WTC11 (cell line): ENCODE measurements at regions of chr19 and their contacts with region 1.

Region 1: DNA sequence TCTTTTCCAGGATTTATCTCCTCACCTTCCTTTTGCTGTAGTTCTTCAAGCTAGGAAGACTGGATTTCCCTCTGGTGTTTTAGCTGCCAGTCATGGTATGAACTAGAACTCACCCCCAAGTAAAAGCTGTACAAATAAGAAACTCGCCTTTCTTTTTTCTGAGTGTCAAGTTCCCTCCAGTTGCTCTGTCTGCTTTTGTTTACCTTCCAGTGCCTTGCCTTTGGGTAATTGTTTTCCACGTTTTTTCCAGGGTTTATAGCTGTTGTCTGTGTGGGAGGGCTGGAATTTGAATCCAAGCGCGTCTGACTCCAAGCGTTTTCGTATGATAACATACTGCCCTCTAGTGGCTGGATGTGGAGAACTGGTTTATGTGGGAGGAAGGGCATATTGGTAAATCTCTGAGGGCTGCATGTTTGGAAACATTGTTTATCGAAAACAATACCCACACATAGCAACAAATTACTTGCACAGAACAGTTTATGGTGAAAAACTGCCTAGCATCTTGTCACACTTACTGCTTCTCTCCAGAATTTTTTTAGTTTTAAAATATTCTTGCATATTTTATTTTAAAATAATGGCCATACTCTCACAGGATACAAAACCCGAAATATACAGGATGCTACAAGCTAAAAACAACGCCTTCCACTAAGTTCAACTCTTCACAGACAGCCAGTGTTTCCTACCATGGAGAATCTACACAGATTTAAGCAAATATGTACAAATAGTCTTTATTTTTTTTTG is 19.2 kb downstream of the RCN3 start:
- DNase-seq: peak; percentile 71
- ATAC-seq: peak; percentile 83
- H3K4me3 Mint-ChIP-seq: peak overlapping the region; percentile 52
- H3K27ac Mint-ChIP-seq: peak overlapping the region; percentile 67
- H3K4me1 Mint-ChIP-seq: peaks cover 4% of the 10 kb centered on the region
- H3K27me3 Mint-ChIP-seq: no peaks in the 10 kb centered on the region
- CTCF ChIP-seq: peak; percentile 72

Region 2: GRCh38 chr19:49451430-49452181 is 95.4 kb before region 1 on chr19 and contains the start of gene PIH1D1:
- CTCF ChIA-PET with region 1: interaction called, 17 read pairs
- POLR2A ChIA-PET with region 1: no interaction called
- DNase-seq: peak; percentile 96
- ATAC-seq: peak; percentile 59
- H3K4me3 Mint-ChIP-seq: peak within 1 kb of the TSS; percentile 94
- H3K27ac Mint-ChIP-seq: peak within 1 kb of the TSS; percentile 100
- H3K4me1 Mint-ChIP-seq: peaks cover 36% of the 10 kb centered on the region
- H3K27me3 Mint-ChIP-seq: no peaks in the 10 kb centered on the region
- CTCF ChIP-seq: no peak
- total RNA-seq, gene PIH1D1: 153 to 170 TPM (median 156 TPM) in 3 replicates

Region 3: DNA sequence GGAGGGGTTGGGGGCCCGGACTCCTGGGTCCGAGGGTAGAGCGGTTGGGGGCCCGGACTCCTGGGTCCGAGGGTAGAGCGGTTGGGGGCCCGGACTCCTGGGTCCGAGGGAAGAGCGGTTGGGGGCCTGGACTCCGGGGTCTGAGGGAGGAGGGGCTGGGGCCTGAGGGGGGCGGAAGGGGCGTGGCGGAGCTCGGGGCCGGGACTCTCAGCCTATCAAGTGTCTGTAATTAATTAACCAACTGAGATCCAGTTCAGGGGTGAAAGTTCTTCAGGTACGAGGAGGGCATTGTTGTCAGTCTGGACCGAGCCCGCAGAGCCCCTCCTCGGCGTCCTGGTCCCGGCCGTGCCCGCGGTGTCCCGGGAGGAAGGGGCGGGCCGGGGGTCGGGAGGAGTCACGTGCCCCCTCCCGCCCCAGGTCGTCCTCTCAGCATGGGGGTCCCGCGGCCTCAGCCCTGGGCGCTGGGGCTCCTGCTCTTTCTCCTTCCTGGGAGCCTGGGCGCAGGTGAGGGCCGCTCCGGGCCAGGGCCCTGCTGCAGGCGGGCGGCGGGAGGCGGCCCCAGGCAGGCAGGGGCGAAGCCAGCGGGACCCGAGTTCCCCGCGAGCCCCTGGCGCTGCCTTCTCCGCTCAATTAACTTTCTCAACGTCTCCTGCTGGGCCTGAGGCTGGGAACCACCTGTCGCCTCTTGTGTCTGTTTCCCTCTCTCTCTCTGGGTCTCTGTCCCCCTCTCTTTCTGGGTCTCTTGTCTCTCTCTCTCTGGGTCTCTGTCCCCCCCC is 33.8 kb before region 1 on chr19:
- CTCF ChIA-PET with region 1: interaction called, 40 read pairs
- POLR2A ChIA-PET with region 1: interaction called, 3 read pairs
- DNase-seq: peak; percentile 65
- ATAC-seq: peak; percentile 74
- H3K4me3 Mint-ChIP-seq: peak overlapping the region; percentile 79
- H3K27ac Mint-ChIP-seq: 0 out of 2 replicates have a peak overlapping the region, but pooled peaks have one; percentile 74
- H3K4me1 Mint-ChIP-seq: peaks cover 28% of the 10 kb centered on the region
- H3K27me3 Mint-ChIP-seq: no peaks in the 10 kb centered on the region
- CTCF ChIP-seq: no peak

Region 4: GRCh38 chr19:49533551-49534488 is 13.2 kb before region 1 on chr19:
- CTCF ChIA-PET with region 1: interaction called, 62 read pairs
- POLR2A ChIA-PET with region 1: no interaction called
- DNase-seq: peak; percentile 82
- ATAC-seq: peak; percentile 75
- H3K4me3 Mint-ChIP-seq: peak overlapping the region; percentile 71
- H3K27ac Mint-ChIP-seq: no peak overlapping the region
- H3K4me1 Mint-ChIP-seq: peaks cover 17% of the 10 kb centered on the region
- H3K27me3 Mint-ChIP-seq: peaks cover 22% of the 10 kb centered on the region
- CTCF ChIP-seq: no peak

Region 5: DNA sequence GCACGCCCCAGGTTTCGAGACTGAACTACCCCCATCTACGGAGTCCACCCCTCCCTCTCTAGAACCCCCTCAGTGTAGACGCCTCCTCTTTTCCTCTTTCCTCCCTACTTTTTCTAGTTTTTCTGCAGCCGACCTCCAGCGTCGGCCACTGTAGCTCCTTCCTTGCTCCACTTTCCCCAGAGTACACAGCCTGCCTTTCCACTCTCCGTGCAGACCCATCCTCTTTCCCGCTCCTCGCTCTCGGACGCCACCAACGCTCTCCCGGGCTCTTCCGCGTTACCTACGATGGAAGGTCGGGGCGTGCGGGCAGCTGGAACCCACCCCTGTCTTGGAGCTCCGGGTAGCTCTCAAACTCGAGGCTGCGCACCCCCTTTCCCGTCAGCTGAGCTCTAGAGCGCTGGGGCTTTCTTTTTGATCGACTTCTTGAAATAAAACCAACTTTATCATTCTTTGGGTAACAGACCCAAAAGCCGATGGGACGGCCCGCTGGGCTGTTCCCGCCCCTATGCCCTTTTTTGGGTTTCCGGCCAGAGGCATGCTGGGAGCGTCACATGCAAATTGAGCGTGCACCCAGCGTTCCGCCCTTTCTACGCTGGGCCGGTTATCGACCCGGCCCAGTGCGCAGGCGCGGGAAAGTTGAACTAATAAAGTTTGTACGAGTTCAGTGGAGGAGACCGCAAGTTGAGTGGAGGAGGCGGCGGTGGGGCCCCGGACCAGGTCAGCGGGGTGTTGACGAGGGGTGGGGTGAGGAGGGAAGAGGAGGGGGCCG is 118.5 kb after region 1 on chr19 and contains the starts of genes BCL2L12 and IRF3:
- CTCF ChIA-PET with region 1: interaction called, 11 read pairs
- POLR2A ChIA-PET with region 1: no interaction called
- DNase-seq: peak; percentile 97
- ATAC-seq: peak; percentile 70
- H3K4me3 Mint-ChIP-seq: peak within 1 kb of the TSS; percentile 98
- H3K27ac Mint-ChIP-seq: peak within 1 kb of the TSS; percentile 98
- H3K4me1 Mint-ChIP-seq: peaks cover 12% of the 10 kb centered on the region
- H3K27me3 Mint-ChIP-seq: no peaks in the 10 kb centered on the region; the same call in 1 of the 2 replicates
- CTCF ChIP-seq: no peak
- total RNA-seq, gene BCL2L12: 139 to 146 TPM (median 140 TPM) in 3 replicates
- total RNA-seq, gene IRF3: 149 to 165 TPM (median 154 TPM) in 3 replicates